Panc1 (cell line): ENCODE measurements at regions of chr17 and their contacts with region 1.

Region 1: GRCh38 chr17:72120642-72121163 is at the start of gene SOX9:
- DNase-seq: peak; percentile 85
- ATAC-seq: peak; percentile 87
- H3K4me3 ChIP-seq: peak within 1 kb of the TSS; percentile 76 to 89
- H3K27ac ChIP-seq: peak within 1 kb of the TSS; percentile 97
- H3K4me1 ChIP-seq: peaks cover 28% of the 10 kb centered on the region
- H3K27me3 ChIP-seq: no peaks in the 10 kb centered on the region
- CTCF ChIP-seq: no peak
- total RNA-seq, gene SOX9: 79.5 TPM

Region 2: GRCh38 chr17:70767102-70767701 is 1353.5 kb before region 1 on chr17:
- CTCF ChIA-PET with region 1: interaction called, 4 read pairs
- POLR2A ChIA-PET with region 1: interaction called, 8 read pairs
- in situ Hi-C with region 1: no loop called
- intact Hi-C with region 1: loop called (anchors 5 kb)
- DNase-seq: no peak
- ATAC-seq: no peak
- H3K4me3 ChIP-seq: no peak overlapping the region
- H3K27ac ChIP-seq: no peak overlapping the region
- H3K4me1 ChIP-seq: no peaks in the 10 kb centered on the region
- H3K27me3 ChIP-seq: peaks cover 2% of the 10 kb centered on the region; the same call in 1 of the 2 replicates
- CTCF ChIP-seq: peak; percentile 77; the same call in 1 of the 2 replicates

Region 3: DNA sequence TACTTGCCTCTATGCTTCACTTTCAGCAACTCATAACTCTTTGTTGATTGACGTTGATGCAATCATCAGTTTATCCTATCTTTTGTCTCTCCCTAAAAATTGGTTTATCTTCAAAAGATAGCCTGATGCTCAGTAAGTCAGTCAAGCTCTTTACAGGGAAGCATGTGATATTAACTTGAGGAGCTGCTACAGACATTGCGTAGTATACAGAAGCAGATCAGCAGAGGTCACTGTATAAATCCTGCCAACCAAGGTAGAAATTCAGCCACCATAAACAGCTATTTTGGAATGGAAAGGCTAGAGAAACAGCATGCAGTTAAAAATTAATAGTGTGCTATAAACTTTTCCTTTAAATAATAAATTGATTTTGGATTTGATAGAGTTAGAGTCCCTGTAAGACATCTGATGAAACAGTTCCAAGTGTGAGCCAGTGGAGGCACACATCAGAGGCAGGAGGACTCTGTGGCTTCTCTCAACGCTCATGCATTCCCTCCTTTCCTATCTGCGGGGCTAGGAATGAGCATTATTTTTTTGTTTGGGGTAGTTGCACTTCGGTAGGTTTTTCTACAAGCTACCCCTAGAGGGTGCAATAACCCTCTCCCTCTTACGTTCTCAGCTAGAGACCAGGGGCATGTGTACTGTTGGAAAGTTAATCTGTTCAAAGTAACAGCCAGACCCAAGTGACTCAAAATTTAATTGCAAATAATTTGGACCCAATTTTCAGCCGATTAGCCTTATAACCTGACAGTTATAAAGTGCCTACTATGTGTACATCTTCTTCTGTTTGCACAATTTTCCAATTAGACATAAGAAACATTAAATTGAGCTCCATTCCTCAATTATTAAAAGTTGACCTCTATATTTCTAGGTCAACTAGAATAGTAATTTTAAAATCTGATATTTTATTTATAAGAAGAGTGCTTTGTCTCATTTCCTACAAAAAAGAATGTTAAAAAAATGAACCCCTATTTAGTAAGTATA is 647.6 kb before region 1 on chr17:
- CTCF ChIA-PET with region 1: interaction called, 3 read pairs
- POLR2A ChIA-PET with region 1: interaction called, 3 read pairs
- in situ Hi-C with region 1: no loop called
- intact Hi-C with region 1: loop called (anchors 1 kb)
- DNase-seq: peak; percentile 32
- ATAC-seq: peak; percentile 93
- H3K4me3 ChIP-seq: no peak overlapping the region
- H3K27ac ChIP-seq: no peak overlapping the region
- H3K4me1 ChIP-seq: no peaks in the 10 kb centered on the region
- H3K27me3 ChIP-seq: no peaks in the 10 kb centered on the region
- CTCF ChIP-seq: peak; percentile 89

Region 4: GRCh38 chr17:72090108-72090507 is 30.6 kb before region 1 on chr17:
- CTCF ChIA-PET with region 1: no interaction called
- POLR2A ChIA-PET with region 1: interaction called, 10 read pairs
- in situ Hi-C with region 1: no loop called
- intact Hi-C with region 1: no loop called
- DNase-seq: no peak
- ATAC-seq: no peak
- H3K4me3 ChIP-seq: no peak overlapping the region
- H3K27ac ChIP-seq: no peak overlapping the region
- H3K4me1 ChIP-seq: no peaks in the 10 kb centered on the region
- H3K27me3 ChIP-seq: no peaks in the 10 kb centered on the region
- CTCF ChIP-seq: no peak

Region 5: GRCh38 chr17:72338847-72339790 is 218.4 kb after region 1 on chr17:
- CTCF ChIA-PET with region 1: no interaction called
- POLR2A ChIA-PET with region 1: interaction called, 7 read pairs
- in situ Hi-C with region 1: no loop called
- intact Hi-C with region 1: loop called (anchors 10 kb)
- DNase-seq: peak; percentile 79
- ATAC-seq: peak; percentile 93
- H3K4me3 ChIP-seq: peak overlapping the region in 1 of 2 experiments; percentile 8; a peak in 1 of 4 replicates
- H3K27ac ChIP-seq: peak overlapping the region; percentile 75
- H3K4me1 ChIP-seq: peaks cover 23% of the 10 kb centered on the region
- H3K27me3 ChIP-seq: no peaks in the 10 kb centered on the region
- CTCF ChIP-seq: no peak

Region 6: DNA sequence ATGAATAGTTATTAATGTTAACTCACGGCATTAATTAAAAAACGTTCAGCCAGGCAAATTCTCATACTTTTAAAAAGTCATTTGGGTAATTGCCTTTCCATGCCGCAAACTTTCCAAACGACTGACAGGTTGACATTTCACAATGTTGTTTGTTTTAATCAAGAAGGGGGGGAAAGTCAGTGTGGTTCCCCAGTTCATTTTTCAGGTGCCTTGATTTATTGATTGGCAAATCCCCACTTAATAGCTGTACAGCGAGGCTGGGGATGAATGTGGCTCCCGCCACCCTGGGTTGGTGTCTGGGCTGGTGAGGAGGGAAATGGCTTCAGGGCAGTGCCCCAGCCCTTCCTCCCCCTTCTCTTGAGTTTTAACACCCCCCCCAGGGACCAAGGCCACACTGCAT is 318.1 kb after region 1 on chr17:
- CTCF ChIA-PET with region 1: no interaction called
- POLR2A ChIA-PET with region 1: interaction called, 13 read pairs
- in situ Hi-C with region 1: no loop called
- intact Hi-C with region 1: no loop called
- DNase-seq: no peak
- ATAC-seq: no peak
- H3K4me3 ChIP-seq: no peak overlapping the region
- H3K27ac ChIP-seq: peak overlapping the region; percentile 52; the same call in 1 of the 2 replicates
- H3K4me1 ChIP-seq: peaks cover 94% of the 10 kb centered on the region
- H3K27me3 ChIP-seq: no peaks in the 10 kb centered on the region
- CTCF ChIP-seq: no peak

Region 7: GRCh38 chr17:72539981-72540897 is 419.5 kb after region 1 on chr17:
- CTCF ChIA-PET with region 1: no interaction called
- POLR2A ChIA-PET with region 1: interaction called, 8 read pairs
- in situ Hi-C with region 1: no loop called
- intact Hi-C with region 1: loop called (anchors 2 kb)
- DNase-seq: no peak
- ATAC-seq: peak; percentile 94
- H3K4me3 ChIP-seq: peak overlapping the region; percentile 21 to 39
- H3K27ac ChIP-seq: peak overlapping the region; percentile 86
- H3K4me1 ChIP-seq: peaks cover 70% of the 10 kb centered on the region
- H3K27me3 ChIP-seq: no peaks in the 10 kb centered on the region
- CTCF ChIP-seq: peak; percentile 99